ENCODE measurements at regions of chr6 and their contacts with region 1.

Region 1: GRCh38 chr6:15369838-15370237 is 124.0 kb downstream of the JARID2 start:
- DNase-seq: no peak

Region 2: GRCh38 chr6:13511913-13512717 is 1857.7 kb before region 1 on chr6:
- intact Hi-C with region 1: loop called in 1 of 2 experiments (anchors 10 kb)
- DNase-seq: no peak